ENCODE measurements at regions of chr17 and their contacts with region 1.

Region 1: GRCh38 chr17:40168262-40168832 is 8.9 kb upstream of the RAPGEFL1 start:
- DNase-seq: peak; percentile 71
- CTCF ChIP-seq: peak; percentile 75

Region 2: DNA sequence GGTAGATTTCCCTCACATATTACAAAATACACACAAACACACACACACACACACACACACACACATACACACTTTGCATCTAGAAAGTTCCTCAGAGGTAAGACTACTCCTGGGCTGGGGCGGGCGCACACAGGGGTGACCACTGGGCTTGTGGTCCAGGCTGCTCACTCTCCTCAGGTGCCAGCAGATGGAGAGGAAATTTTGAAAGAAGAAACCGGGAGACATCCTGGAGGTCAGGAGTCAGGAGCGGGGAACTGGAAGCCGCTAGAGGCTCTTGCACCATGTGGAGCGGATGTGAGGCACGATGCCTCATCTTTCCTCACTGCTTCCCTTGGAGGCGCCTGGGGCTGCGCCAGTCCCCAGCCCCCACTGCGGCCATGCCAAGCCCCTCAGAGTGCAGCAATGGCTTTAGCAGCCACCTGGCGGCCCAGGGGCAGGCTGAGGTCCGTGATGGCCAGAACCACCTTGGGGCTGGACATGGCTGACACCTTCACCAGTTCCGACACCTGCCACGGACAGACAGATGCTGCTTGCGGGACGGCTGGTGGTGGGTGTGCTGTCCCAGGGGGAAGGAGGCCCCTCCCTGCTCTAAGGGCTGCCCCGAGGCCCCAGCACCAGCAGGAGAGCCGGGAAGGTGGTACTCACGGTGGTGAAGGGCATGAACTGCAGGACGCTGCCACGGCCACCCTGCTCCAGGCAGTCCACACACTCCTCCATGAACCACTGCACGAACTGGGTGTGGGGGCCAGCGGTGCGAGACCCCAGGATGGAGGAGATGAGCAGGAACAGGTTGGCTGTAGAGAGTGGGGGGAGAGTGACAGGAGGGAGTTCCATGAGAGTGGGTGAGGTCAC is 149.0 kb before region 1 on chr17:
- CTCF ChIA-PET with region 1: interaction called, 19 read pairs
- POLR2A ChIA-PET with region 1: no interaction called
- DNase-seq: no peak
- CTCF ChIP-seq: no peak

Region 3: DNA sequence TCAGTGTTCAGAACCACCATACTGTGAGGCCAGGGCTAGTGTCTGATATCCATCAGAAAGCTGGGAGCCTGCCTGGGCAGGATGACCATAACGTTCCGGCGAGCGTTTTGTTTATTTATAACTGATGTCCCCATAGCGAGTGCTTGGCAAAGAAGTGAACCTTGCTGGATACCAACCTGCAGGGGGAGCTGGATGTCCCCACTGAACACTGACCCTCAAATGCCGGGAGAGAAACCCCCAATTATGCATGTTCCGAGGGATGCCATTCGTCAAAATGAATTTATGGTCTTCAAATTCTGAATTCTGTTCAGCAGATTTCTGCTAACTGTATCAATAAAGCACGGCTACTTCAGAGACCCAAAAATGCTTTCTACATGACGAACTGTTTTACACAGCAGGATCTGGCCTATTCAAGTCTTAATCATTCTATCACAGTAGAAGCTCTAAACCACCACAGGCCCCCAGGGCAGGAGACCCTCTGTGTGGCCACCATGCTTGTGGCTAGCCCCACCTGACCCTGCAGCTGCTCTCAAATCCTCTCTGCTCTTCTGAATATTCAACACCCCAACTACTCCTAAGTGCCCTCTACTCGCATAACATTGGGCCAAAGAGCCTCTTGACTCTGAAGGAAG is 129.3 kb before region 1 on chr17:
- CTCF ChIA-PET with region 1: interaction called, 10 read pairs
- POLR2A ChIA-PET with region 1: no interaction called
- DNase-seq: no peak
- CTCF ChIP-seq: peak; percentile 10

Region 4: GRCh38 chr17:40150276-40150675 is 18.1 kb before region 1 on chr17:
- CTCF ChIA-PET with region 1: interaction called, 117 read pairs
- POLR2A ChIA-PET with region 1: no interaction called
- DNase-seq: no peak
- CTCF ChIP-seq: no peak

Region 5: DNA sequence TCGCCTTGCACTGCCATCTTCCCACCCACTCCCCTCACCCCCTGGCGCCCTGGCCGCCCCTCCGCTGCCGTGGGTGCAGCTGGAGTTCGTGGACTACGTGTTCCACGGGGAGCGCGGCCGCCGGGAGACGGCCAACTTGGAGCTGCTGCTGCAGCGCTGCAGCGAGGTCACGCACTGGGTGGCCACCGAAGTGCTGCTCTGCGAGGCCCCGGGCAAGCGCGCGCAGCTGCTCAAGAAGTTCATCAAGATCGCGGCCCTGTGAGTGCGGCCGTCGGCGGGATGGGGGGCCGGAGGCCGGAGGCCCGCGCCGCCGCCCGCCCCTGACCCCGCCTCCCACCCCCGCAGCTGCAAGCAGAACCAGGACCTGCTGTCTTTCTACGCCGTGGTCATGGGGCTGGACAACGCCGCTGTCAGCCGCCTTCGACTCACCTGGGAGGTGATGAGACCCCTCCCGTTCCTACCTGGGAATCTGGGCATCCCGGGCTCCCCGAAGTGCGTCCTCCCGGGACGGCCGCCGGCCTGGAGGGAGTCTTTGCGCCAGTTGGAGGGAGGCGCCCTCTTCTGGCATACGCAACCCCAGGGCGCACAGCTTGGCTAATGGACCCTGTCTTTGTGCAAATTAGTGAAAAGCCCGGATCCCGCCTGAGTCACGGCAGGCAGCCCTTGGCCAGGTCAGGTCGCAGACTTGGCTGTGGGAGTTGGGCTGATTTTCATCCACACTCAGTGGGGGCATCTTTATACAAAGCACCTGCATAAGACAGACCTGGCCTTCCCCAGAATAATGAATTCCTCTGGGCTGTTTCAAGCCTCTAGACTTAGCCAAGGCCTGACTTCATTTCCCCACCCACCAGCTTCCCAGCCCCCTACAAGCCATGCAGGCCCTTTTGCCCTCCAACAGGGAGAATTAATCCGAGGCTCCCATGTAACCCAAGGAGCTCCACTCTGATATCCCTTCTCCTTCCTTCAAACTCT is 23.2 kb after region 1 on chr17:
- CTCF ChIA-PET with region 1: interaction called, 35 read pairs
- POLR2A ChIA-PET with region 1: no interaction called
- DNase-seq: peak; percentile 87
- CTCF ChIP-seq: peak; percentile 90